ENCODE measurements at regions of chr5 and their contacts with region 1.

Region 1: DNA sequence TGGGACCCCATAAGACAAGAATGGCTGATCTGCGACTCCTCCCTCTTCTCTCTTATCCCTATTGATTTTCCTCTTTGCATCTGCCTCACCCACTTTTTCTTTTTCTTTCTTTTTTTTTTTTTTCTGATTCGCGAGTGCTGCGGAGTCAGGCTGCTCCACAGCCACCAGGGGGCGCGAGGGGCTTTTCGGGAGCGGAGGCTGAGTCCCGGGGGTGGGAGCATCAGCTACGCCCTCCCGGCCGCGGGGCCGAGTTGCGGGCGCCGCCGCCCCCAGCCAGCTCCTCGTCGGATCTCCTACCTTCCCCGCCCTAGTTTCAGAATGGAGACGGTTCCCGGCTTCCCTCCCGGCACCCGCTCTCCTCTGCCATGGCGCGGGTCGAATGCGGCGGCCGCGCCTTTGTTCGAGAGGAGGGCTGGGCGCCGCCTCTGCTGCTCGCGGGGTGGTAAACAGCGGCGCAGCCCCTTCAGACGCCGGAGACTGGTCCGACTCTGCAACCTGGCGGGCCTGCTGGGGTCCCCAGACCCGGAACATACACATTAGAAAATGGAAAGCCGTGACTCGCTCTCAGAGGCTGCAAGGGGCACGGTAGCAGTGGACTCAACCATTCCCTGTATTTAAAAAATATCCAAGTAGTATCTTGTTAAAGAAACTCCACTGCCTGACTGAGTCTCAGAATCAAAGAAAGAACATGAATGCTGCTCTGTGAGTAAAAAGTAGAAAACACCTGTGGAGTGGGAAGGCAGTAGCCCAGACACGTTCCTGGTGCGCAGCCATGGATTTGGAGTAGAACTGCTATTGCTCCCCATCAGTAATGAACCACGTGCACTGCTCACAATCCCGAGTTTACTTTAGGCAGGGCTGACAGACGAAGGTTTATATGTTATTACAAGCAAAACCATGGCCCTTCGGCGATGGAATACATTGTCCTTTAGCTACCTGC is 55.7 kb downstream of the DPYSL3 start:
- DNase-seq: peak; percentile 76
- ATAC-seq: peak; percentile 86 to 95
- H3K4me3 ChIP-seq: peak overlapping the region; percentile 58
- H3K27ac ChIP-seq: peak overlapping the region; percentile 62 to 89; a peak in 5 of 6 replicates
- H3K4me1 ChIP-seq: 0 out of 3 replicates have a peak, but pooled peaks cover 2% of the 10 kb centered on the region
- CTCF ChIP-seq: peak; percentile 81
- EP300 ChIP-seq: no peak
- POLR2A ChIP-seq: no peak
- RAD21 ChIP-seq: peak; percentile 68 to 76

Region 2: GRCh38 chr5:147439254-147439653 is 14.9 kb before region 1 on chr5:
- CTCF ChIA-PET with region 1: interaction called, 12 read pairs
- POLR2A ChIA-PET with region 1: no interaction called
- DNase-seq: no peak
- ATAC-seq: 0 out of 6 replicates have a peak, but pooled peaks of 1 of the 2 experiments have one; percentile 43
- H3K4me3 ChIP-seq: no peak overlapping the region
- H3K27ac ChIP-seq: no peak overlapping the region
- H3K4me1 ChIP-seq: no peaks in the 10 kb centered on the region
- CTCF ChIP-seq: no peak
- EP300 ChIP-seq: no peak
- POLR2A ChIP-seq: no peak
- RAD21 ChIP-seq: no peak

Region 3: DNA sequence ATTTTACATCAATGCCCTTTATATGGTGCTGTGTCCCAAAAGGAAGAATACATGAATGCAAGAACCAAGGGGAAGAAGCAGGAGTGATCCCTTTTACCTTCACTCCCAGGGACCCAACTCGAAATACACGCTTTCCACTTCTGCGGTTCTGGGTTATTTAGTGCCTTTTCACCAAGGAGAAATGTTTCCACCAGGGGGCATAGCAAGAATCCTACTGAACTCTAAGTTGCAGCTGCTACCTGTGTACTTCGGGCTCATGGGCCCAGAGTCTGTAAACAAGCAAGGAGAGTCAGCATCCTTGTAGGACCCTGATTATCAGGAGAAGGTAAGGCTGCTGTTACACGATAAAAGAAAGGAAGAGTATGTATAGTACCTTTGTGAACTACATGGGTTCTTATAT is 10.1 kb after region 1 on chr5:
- CTCF ChIA-PET with region 1: interaction called, 13 read pairs
- POLR2A ChIA-PET with region 1: no interaction called
- DNase-seq: peak in 1 of 2 experiments; percentile 49
- ATAC-seq: peak; percentile 71 to 80; a peak in 4 of 6 replicates
- H3K4me3 ChIP-seq: no peak overlapping the region
- H3K27ac ChIP-seq: no peak overlapping the region
- H3K4me1 ChIP-seq: no peaks in the 10 kb centered on the region
- CTCF ChIP-seq: peak; percentile 33
- EP300 ChIP-seq: no peak
- POLR2A ChIP-seq: no peak
- RAD21 ChIP-seq: peak; percentile 37 to 46; a peak in 4 of 5 replicates

Region 4: DNA sequence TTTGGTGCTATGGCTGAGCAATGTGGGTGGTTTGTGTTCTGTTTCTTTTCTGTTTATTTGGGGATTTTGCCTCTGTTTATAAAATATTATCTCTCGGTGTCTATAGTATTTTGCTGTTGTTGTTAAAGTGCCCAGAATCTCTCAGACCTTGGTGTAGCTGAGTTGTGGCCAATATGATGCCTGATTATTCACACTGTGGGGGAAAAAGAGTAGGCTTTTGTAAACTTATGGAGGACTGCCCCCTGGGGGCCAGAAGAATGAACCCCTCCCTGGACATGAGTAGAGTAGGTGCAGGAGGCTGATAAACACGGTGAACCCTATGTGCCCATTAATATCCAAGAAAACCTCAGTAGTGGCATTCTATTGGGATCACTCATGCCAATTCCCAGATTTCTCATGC is 104.7 kb after region 1 on chr5:
- CTCF ChIA-PET with region 1: interaction called, 36 read pairs
- POLR2A ChIA-PET with region 1: no interaction called
- DNase-seq: peak; percentile 25 to 41
- ATAC-seq: peak; percentile 81 to 87
- H3K4me3 ChIP-seq: no peak overlapping the region
- H3K27ac ChIP-seq: no peak overlapping the region
- H3K4me1 ChIP-seq: no peaks in the 10 kb centered on the region
- CTCF ChIP-seq: peak; percentile 48; the same call in 2 of the 3 replicates
- EP300 ChIP-seq: no peak
- POLR2A ChIP-seq: no peak
- RAD21 ChIP-seq: peak; percentile 62 to 66